Common myeloid progenitor, CD34-positive (primary cell): ENCODE measurements at regions of chr7 and their contacts with region 1.

Region 1: DNA sequence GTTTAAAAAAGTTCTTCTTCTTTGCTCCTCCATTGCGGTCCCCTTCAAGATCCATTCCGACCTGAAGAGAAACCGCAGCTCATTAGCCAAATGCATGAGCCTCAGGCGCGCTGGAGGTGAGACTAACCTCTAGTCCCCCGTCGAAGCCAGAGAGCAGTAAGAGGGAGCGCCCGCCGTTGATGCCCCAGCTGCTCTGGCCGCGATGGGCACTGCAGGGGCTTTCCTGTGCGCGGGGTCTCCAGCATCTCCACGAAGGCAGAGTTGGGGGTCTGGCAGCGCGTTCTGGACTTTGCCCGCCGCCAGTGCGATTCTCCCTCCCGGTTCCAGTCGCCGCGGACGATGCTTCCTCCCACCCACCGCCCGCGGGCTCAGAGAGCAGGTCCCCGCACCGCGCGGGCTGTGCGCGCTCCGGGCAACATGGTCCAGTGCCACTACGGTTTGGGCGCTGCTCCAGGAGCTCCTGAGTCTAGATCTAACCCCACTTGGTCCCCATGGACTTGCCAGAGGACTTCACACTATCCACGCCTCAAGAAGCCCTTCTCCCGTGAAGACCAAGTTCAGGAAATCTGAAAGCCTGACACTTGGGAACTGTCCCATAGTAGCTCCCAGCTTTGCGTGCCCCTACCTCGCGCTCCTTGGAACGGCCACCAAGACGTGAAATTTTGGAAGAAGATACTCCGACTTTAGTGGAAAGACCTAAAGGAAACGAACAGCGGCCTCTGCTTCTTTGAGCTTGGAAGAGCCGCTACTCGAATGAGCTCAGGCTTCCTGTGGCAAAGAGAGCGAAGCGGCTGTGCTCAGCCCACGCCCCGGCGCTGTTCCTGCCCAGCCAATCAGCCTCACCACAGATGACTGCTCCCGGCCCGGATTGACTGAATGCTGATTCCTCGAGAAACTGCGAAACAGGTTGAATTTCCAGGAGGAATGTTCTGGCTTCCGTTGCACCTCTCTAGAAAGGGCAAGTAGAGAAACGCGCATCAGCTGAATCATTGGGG is at the start of gene ABCB1:
- DNase-seq: peak; percentile 57 to 79 (median 73)
- H3K4me3 ChIP-seq: peak within 1 kb of the TSS; percentile 66 to 96 (median 84)
- H3K27ac ChIP-seq: peak within 1 kb of the TSS; percentile 18 to 58
- H3K4me1 ChIP-seq: peaks cover 0 to 33% (median 16%) of the 10 kb centered on the region in 4 experiments
- H3K27me3 ChIP-seq: no peaks in the 10 kb centered on the region

Region 2: GRCh38 chr7:87580636-87581035 is 19.8 kb before region 1 on chr7:
- CTCF ChIA-PET with region 1: interaction called, 13 read pairs
- POLR2A ChIA-PET with region 1: no interaction called
- DNase-seq: no peak
- H3K4me3 ChIP-seq: no peak overlapping the region
- H3K27ac ChIP-seq: no peak overlapping the region
- H3K4me1 ChIP-seq: no peaks in the 10 kb centered on the region
- H3K27me3 ChIP-seq: no peaks in the 10 kb centered on the region